ENCODE measurements at regions of chr4 and their contacts with region 1.

Region 1: DNA sequence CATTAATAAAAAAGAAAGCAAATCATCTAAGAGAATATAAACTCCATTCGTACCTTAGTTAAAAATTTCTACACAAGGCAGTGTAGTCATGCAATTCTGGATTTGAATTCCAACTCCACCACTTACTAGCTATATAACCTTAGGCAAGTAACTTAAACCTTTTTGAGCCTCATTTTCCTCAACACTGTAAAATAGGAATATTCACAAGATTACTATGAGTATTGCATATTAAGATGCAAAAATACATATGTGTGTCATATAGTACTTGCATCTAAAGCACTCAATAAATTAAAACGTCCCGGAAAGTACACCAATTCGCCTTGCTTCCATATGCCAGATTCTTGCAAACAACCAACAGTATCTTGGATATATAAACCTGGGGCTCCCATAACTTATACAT is 42.0 kb downstream of the HNRNPD start:
- DNase-seq: no peak
- H3K4me3 ChIP-seq: no peak overlapping the region
- H3K27ac ChIP-seq: no peak overlapping the region
- H3K4me1 ChIP-seq: no peaks in the 10 kb centered on the region
- H3K27me3 ChIP-seq: no peaks in the 10 kb centered on the region
- CTCF ChIP-seq: no peak
- EP300 ChIP-seq: no peak
- POLR2A ChIP-seq: no peak
- RAD21 ChIP-seq: no peak

Region 2: DNA sequence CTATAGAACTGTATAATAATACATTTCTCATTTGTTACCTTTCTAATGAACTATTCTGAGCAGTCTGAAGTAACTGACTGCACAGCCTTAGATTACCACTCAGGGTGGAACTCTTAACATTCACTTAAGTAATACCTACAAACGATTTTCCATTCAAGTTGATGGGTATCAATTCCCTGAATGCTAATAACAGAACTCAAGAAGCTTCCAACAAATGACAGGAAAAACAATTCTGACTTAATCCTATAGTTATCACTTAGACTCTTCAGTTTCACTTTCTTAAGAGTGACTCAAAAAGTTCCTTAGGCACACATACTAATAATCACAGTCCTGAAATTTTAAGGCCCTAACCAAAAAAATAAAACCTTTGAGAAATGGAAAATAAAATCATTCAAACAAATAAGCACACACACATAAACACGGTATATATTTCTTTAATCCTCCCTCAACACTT is 21.1 kb after region 1 on chr4:
- CTCF ChIA-PET with region 1: no interaction called
- POLR2A ChIA-PET with region 1: interaction called, 25 read pairs
- DNase-seq: no peak
- H3K4me3 ChIP-seq: no peak overlapping the region
- H3K27ac ChIP-seq: no peak overlapping the region
- H3K4me1 ChIP-seq: no peaks in the 10 kb centered on the region
- H3K27me3 ChIP-seq: peaks cover 0 to 1% (median 0%) of the 10 kb centered on the region in 4 experiments; a peak in 1 of 7 replicates
- CTCF ChIP-seq: no peak
- EP300 ChIP-seq: no peak
- POLR2A ChIP-seq: no peak
- RAD21 ChIP-seq: no peak

Measured in H1 (cell line).